Naive thymus-derived CD8-positive, alpha-beta T cell (primary cell): ENCODE measurements at regions of chr3 and their contacts with region 1.

Region 1: DNA sequence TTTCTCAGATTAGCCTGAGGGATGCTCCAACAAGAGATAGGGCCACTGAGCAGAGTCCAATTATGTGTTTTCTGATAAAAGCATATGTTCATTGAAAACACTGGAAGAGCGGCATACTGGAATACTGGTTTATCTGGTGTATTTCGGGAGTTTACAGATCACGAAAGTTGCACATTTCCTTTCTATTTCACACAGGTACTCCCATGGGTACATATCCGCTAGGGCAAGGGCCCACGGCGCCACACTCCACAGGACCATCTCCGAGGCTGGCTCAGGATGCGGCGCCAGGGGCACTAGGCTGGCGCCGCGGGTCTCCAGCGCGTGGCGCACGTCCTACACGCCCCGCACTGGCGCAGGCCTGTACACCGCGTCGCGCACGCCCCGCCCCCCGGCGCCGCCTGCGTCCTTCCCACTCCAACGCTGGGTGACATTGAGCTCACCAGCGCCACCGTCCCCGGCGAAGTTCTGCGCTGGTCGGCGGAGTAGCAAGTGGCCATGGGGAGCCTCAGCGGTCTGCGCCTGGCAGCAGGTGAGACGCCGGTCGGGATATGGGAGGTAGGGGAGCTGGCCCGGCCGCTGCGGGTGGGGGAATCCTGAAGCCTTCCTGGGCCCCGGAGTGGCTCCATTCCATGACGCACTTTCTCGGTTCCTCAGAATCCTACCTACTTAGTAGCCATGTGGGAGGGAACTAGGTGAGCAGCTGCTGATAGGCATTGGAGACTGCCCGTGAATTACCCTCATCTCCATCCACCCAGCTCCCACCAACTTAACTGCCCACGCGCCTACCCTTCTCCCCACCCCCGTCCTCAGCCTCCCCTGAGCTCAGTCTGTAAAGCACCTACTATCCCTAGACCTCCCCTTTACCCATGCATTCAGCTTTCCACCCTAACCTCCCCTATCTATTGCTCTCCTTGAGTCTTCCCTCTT is at the start of gene FAM162A:
- DNase-seq: peak; percentile 88 to 95 (median 92)
- ATAC-seq: peak; percentile 94 to 95
- H3K4me3 Mint-ChIP-seq: peak within 1 kb of the TSS; percentile 90 to 97 (median 94)
- H3K27ac Mint-ChIP-seq: peak within 1 kb of the TSS; percentile 89 to 98 (median 96)
- H3K4me1 Mint-ChIP-seq: peaks cover 25 to 58% (median 47%) of the 10 kb centered on the region in 4 donors
- H3K27me3 Mint-ChIP-seq: no peaks in the 10 kb centered on the region
- polyA plus RNA-seq, gene FAM162A: 114 to 132 (median 131) TPM

Region 2: GRCh38 chr3:122342803-122343202 is 41.2 kb before region 1 on chr3:
- POLR2A ChIA-PET with region 1: no interaction called
- DNase-seq: no peak
- ATAC-seq: no peak
- H3K4me3 Mint-ChIP-seq: no peak overlapping the region
- H3K27ac Mint-ChIP-seq: peak overlapping the region in 1 of 10 donors; percentile 21
- H3K4me1 Mint-ChIP-seq: no peaks in the 10 kb centered on the region
- H3K27me3 Mint-ChIP-seq: peaks cover 0 to 3% (median 1%) of the 10 kb centered on the region in 5 donors

Region 3: DNA sequence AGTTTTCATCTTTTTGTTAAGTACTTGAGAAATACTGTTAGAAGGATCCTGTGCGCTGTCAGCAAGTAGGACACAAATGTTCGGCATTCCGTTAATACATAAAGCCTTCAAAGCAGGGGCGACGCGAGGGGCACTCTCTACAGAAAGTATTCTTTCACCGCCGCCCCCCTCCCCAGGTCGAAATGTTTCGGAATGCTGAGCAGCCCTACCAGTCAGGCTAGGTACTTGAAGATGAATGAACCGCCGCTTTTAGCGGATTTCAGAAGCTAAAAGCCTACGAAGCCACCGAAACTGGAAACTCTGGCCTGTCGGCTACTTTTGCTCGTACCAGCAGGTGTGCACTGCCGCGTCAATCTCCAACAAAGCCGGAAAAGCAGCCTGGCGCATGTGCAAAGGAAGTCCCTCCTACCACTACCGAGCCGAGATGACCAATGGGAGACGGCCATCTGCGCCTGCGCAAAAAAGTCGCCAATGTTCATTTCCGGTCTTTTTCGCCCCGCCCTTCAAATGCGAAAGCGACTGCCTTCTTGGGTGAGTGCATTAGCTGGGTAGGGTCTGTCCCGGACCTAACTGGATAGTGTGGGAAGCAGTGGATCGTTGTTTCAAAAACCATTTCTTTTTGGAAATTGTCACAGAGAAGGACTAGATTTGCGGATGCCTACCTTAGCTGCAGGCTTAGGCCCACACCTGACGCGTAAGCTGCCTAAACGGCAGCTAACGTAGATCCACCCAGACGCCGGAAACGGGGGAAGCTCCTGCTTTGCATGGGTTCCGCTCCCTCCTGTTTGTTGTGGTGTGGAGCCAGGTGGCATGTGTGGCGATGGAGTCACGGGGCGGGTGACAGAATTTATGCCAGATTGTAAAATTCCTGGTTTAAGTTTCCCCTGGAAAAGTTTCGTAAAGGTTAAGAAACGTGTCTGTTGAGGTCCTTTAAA is 32.0 kb after region 1 on chr3 and contains the start of gene WDR5B:
- POLR2A ChIA-PET with region 1: interaction called, 71 read pairs
- DNase-seq: peak; percentile 89 to 99 (median 98)
- ATAC-seq: peak; percentile 88 to 89
- H3K4me3 Mint-ChIP-seq: peak within 1 kb of the TSS; percentile 95 to 100 (median 98)
- H3K27ac Mint-ChIP-seq: peak within 1 kb of the TSS; percentile 96 to 100 (median 100)
- H3K4me1 Mint-ChIP-seq: peaks cover 30 to 65% (median 62%) of the 10 kb centered on the region in 4 donors
- H3K27me3 Mint-ChIP-seq: peaks cover 0 to 4% (median 0%) of the 10 kb centered on the region in 5 donors
- polyA plus RNA-seq, gene WDR5B: 1.2 to 2.2 (median 1.7) TPM

Region 4: GRCh38 chr3:122514123-122515019 is 130.3 kb after region 1 on chr3 and contains the start of gene KPNA1:
- POLR2A ChIA-PET with region 1: interaction called, 13 read pairs
- DNase-seq: peak; percentile 78 to 91 (median 87)
- ATAC-seq: peak; percentile 87 to 89
- H3K4me3 Mint-ChIP-seq: peak within 1 kb of the TSS; percentile 82 to 95 (median 90)
- H3K27ac Mint-ChIP-seq: peak within 1 kb of the TSS; percentile 87 to 97 (median 93)
- H3K4me1 Mint-ChIP-seq: peaks cover 27 to 51% (median 45%) of the 10 kb centered on the region in 4 donors
- H3K27me3 Mint-ChIP-seq: no peaks in the 10 kb centered on the region
- polyA plus RNA-seq, gene KPNA1: 36.9 to 49.5 (median 41.7) TPM

Region 5: DNA sequence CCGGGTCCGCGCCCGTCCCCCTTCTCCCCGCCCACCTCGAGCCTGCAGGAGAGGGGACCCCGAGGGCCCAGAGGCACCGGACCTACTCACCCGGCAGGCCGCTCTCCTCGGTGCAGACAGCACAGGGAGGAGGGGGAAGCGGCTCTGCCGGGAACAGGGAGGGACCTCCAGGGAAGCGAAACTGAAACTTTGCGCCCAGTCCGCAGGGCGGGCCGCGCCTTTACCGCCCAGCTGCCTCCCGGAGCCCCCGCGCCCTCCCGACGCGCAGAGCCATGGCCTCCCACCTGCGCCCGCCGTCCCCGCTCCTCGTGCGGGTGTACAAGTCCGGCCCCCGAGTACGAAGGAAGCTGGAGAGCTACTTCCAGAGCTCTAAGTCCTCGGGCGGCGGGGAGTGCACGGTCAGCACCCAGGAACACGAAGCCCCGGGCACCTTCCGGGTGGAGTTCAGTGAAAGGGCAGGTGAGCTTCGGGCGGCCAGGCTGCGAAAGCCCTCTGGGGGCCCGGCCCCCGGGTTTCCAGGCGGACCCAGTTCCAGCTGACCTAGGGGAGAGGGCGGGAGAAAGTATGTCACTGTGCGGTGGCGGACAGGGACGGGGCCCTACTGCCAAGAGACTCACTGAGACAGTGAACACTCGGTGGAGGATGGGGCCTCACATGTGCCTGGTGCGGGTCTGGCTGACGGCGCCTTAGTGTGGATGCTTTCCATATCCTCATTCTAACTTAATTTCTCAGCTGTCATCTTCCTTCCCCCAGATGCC is 180.3 kb after region 1 on chr3 and contains the starts of genes DTX3L and PARP9:
- POLR2A ChIA-PET with region 1: interaction called, 12 read pairs
- DNase-seq: peak; percentile 64 to 86 (median 74)
- ATAC-seq: peak; percentile 90 to 93
- H3K4me3 Mint-ChIP-seq: peak within 1 kb of the TSS; percentile 86 to 100 (median 96)
- H3K27ac Mint-ChIP-seq: peak within 1 kb of the TSS; percentile 86 to 100 (median 98)
- H3K4me1 Mint-ChIP-seq: peaks cover 39 to 95% (median 84%) of the 10 kb centered on the region in 4 donors
- H3K27me3 Mint-ChIP-seq: no peaks in the 10 kb centered on the region
- polyA plus RNA-seq, gene DTX3L: 20.2 to 27.6 (median 26.3) TPM
- polyA plus RNA-seq, gene PARP9: 18.0 to 30.8 (median 18.6) TPM

Region 6: DNA sequence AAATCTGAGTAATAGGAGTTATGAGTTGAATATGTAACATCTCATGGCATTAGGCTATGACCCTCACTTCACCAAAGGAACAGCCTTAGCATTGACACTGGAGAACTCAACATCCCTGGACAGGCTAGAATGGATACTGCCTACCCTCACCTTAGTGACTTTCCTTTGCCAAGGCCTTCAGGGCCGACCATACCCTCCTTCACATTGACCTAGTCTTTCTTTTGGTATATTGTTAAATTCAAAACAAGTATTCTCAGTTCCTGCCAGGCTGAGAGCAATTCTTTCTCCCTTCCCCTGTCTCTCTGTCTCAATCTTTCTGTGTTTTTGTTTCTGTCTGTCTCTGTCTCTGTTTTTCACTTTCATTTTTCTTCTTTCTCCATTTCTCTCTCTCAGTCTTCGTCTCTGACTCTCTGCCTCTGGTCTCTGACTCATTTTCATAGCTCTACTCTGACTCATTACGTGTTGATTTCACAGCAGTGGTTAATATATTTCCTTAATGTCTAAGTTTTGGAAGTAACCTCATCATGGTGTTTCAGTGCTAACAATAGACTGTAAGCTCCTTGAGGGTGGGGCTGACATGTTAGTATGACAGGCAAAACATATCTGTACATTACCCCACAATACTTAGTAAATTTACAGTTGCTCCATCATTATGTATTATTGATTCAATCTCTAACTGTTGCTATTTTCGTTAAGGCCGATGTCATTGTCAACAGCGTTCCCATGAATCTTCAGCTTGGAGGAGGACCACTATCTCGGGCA is 225.9 kb after region 1 on chr3:
- POLR2A ChIA-PET with region 1: no interaction called
- DNase-seq: no peak
- ATAC-seq: no peak
- H3K4me3 Mint-ChIP-seq: peak overlapping the region in 3 of 10 donors; percentile 0 to 72 (median 39)
- H3K27ac Mint-ChIP-seq: peak overlapping the region in 6 of 10 donors; percentile 1 to 96 (median 80)
- H3K4me1 Mint-ChIP-seq: peaks cover 0 to 24% (median 4%) of the 10 kb centered on the region in 4 donors
- H3K27me3 Mint-ChIP-seq: no peaks in the 10 kb centered on the region

Region 7: GRCh38 chr3:122679085-122679881 is 295.2 kb after region 1 on chr3:
- POLR2A ChIA-PET with region 1: interaction called, 18 read pairs
- DNase-seq: peak; percentile 65 to 92 (median 81)
- ATAC-seq: peak; percentile 66 to 73
- H3K4me3 Mint-ChIP-seq: peak overlapping the region; percentile 89 to 98 (median 96)
- H3K27ac Mint-ChIP-seq: peak overlapping the region; percentile 96 to 100 (median 98)
- H3K4me1 Mint-ChIP-seq: peaks cover 28 to 62% (median 57%) of the 10 kb centered on the region in 4 donors
- H3K27me3 Mint-ChIP-seq: no peaks in the 10 kb centered on the region